ENCODE measurements at regions of chr4 and their contacts with region 1.

Region 1: DNA sequence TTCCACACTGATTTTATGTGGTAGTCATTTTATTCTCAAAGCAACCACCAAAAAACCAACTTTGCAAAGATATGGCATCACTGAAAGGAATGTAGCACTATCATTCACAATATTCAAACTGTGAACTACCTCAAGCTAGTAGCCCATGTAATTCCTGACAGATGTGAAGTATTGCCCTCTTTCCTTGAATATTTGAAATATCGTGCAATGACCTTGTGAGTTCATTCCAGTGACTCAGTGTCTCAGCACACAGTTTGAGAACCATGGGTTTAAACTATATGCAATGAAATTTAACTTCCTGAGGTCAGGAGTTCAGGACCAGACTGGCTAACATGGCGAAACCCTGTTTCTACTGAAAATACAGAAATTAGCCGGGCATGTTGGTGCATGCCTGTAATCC is 20.9 kb upstream of the IQCM start:
- DNase-seq: no peak
- ATAC-seq: no peak
- H3K4me3 ChIP-seq: no peak overlapping the region
- H3K27ac ChIP-seq: no peak overlapping the region
- H3K4me1 ChIP-seq: peaks cover 18% of the 10 kb centered on the region
- H3K27me3 ChIP-seq: no peaks in the 10 kb centered on the region
- CTCF ChIP-seq: no peak

Region 2: DNA sequence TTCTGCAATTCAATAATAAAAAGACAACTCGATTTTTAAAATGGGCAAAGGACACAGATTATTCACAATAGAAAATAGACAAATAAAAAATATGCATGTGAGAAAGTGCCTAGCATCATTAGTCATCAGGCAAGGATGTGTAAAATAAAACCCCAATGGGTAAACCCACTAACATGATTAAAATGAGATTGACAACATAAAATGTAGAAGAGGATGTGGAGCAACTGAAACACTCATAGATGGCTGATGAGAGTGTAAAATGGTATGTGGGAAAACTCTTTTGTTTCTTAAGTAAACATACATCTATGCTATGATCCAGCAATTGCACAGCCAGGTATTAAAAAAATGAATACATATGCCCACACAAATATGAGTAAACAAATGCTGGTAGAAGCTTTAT is 198.5 kb before region 1 on chr4:
- CTCF ChIA-PET with region 1: no interaction called
- POLR2A ChIA-PET with region 1: no interaction called
- intact Hi-C with region 1: loop called (anchors 10 kb)
- DNase-seq: peak; percentile 79
- ATAC-seq: peak; percentile 94
- H3K4me3 ChIP-seq: no peak overlapping the region
- H3K27ac ChIP-seq: peak overlapping the region; percentile 70
- H3K4me1 ChIP-seq: peaks cover 15% of the 10 kb centered on the region
- H3K27me3 ChIP-seq: no peaks in the 10 kb centered on the region
- CTCF ChIP-seq: no peak

Region 3: GRCh38 chr4:149735796-149736195 is 100.8 kb before region 1 on chr4:
- CTCF ChIA-PET with region 1: no interaction called
- POLR2A ChIA-PET with region 1: no interaction called
- intact Hi-C with region 1: no loop called
- DNase-seq: peak; percentile 14
- ATAC-seq: no peak
- H3K4me3 ChIP-seq: no peak overlapping the region
- H3K27ac ChIP-seq: no peak overlapping the region
- H3K4me1 ChIP-seq: no peaks in the 10 kb centered on the region
- H3K27me3 ChIP-seq: no peaks in the 10 kb centered on the region
- CTCF ChIP-seq: peak; percentile 32

Measured in PC-3 (cell line).